HepG2 (cell line): ENCODE measurements at regions of chr6 and their contacts with region 1.

Region 1: GRCh38 chr6:18990059-18990978 is 603.2 kb downstream of the RNF144B start:
- DNase-seq: peak; percentile 58
- ATAC-seq: peak; percentile 99
- H3K4me3 ChIP-seq: no peak overlapping the region
- H3K27ac ChIP-seq: no peak overlapping the region
- H3K4me1 ChIP-seq: no peaks in the 10 kb centered on the region
- H3K27me3 ChIP-seq: no peaks in the 10 kb centered on the region
- CTCF ChIP-seq: peak; percentile 89
- EP300 ChIP-seq: no peak
- POLR2A ChIP-seq: no peak
- RAD21 ChIP-seq: peak; percentile 33; the same call in 1 of the 2 replicates

Region 2: DNA sequence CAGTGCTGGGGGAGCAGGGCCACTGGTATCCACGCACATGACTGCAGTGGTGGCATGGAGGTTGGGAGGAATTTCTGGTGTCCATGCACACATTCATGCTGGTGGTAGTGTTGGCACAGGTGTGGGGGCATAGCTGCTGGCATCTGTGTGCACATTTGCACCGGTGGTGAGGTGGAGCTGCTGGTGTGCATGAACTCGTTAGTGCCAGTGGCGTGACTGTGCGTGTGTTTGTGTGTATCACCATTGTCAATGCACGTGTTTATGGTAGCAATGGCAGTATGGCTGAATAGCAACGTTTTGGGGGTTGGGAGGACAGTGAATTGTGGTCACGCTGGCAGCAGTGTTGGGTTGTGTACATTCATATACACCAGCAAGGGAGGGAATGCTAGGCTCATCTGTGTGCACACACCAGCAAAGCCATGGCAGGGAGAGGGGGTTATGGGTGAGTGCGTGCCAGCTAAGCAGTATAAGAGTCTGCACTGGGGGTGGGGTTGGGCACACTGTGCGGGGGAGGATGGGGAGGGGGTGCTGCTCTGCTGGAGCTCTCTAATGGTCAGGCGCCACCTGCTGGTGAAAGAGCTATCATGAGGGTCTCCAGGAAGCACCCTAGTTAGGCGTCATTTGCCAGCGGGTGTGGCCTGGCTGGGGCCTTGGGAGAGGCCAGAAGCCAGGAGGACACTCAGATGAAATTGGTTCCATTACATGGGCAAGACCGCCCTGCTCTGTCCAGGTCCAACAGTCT is 220.7 kb after region 1 on chr6:
- CTCF ChIA-PET with region 1: no interaction called
- POLR2A ChIA-PET with region 1: no interaction called
- in situ Hi-C with region 1: no loop called
- intact Hi-C with region 1: loop called (anchors 1 kb)
- DNase-seq: peak; percentile 20
- ATAC-seq: peak; percentile 73
- H3K4me3 ChIP-seq: no peak overlapping the region
- H3K27ac ChIP-seq: no peak overlapping the region
- H3K4me1 ChIP-seq: no peaks in the 10 kb centered on the region
- H3K27me3 ChIP-seq: no peaks in the 10 kb centered on the region
- CTCF ChIP-seq: peak; percentile 36
- EP300 ChIP-seq: no peak
- POLR2A ChIP-seq: no peak
- RAD21 ChIP-seq: no peak

Region 3: DNA sequence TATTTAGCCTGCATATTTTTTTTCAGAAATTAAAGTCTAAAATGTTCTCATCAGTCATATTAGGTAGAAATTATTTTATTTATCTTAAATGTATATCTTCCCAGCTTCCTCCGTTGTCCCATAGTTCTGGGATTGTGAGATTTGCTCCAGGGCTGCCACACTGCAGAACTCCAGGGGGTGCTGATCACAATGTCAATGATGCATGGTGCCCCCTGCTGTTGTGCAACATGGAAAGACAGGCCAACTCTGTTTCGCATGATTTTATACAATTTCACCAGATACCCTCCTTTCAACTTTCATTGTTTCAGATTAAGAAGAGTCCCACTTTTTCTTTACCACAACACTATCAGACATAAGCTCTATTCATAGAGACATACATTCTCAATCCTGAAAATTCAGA is 882.7 kb after region 1 on chr6:
- CTCF ChIA-PET with region 1: no interaction called
- POLR2A ChIA-PET with region 1: no interaction called
- in situ Hi-C with region 1: loop called (anchors 10 kb)
- intact Hi-C with region 1: no loop called
- DNase-seq: peak; percentile 49
- ATAC-seq: peak; percentile 87
- H3K4me3 ChIP-seq: no peak overlapping the region
- H3K27ac ChIP-seq: no peak overlapping the region
- H3K4me1 ChIP-seq: no peaks in the 10 kb centered on the region
- H3K27me3 ChIP-seq: no peaks in the 10 kb centered on the region
- CTCF ChIP-seq: peak; percentile 48
- EP300 ChIP-seq: no peak
- POLR2A ChIP-seq: no peak
- RAD21 ChIP-seq: no peak

Region 4: DNA sequence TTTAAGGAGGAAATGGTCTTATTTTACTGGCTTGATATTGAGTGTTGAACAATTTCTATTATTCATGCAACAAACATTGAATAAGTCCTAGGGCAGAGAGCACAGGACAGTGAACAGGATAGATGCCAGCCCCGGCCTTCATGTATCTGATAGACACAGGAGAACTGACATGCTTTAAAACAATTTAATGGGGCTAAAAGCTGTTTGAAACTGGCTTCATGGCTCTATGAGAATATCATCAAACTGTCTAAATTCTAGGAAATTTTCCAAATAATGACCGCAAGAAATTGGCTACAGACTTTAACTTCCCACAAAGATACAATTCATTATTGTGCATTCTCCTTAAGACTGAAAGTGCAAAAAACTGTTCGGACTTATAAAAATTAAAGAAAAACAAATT is 915.9 kb after region 1 on chr6:
- CTCF ChIA-PET with region 1: no interaction called
- POLR2A ChIA-PET with region 1: no interaction called
- in situ Hi-C with region 1: no loop called
- intact Hi-C with region 1: loop called (anchors 10 kb)
- DNase-seq: no peak
- ATAC-seq: no peak
- H3K4me3 ChIP-seq: no peak overlapping the region
- H3K27ac ChIP-seq: no peak overlapping the region
- H3K4me1 ChIP-seq: no peaks in the 10 kb centered on the region
- H3K27me3 ChIP-seq: no peaks in the 10 kb centered on the region
- CTCF ChIP-seq: no peak
- EP300 ChIP-seq: no peak
- POLR2A ChIP-seq: no peak
- RAD21 ChIP-seq: no peak